ENCODE measurements at regions of chr11 and their contacts with region 1.

Region 1: GRCh38 chr11:75562048-75562835 is at the start of gene SERPINH1:
- DNase-seq: peak in 2 of 3 donors; percentile 44 to 54
- H3K4me3 ChIP-seq: peak within 1 kb of the TSS; percentile 80 to 89 (median 85)
- H3K27ac ChIP-seq: peak within 1 kb of the TSS in 1 of 2 experiments; percentile 75
- H3K4me1 ChIP-seq: peaks cover 0 to 49% (median 27%) of the 10 kb centered on the region in 4 experiments
- H3K27me3 ChIP-seq: no peaks in the 10 kb centered on the region

Region 2: DNA sequence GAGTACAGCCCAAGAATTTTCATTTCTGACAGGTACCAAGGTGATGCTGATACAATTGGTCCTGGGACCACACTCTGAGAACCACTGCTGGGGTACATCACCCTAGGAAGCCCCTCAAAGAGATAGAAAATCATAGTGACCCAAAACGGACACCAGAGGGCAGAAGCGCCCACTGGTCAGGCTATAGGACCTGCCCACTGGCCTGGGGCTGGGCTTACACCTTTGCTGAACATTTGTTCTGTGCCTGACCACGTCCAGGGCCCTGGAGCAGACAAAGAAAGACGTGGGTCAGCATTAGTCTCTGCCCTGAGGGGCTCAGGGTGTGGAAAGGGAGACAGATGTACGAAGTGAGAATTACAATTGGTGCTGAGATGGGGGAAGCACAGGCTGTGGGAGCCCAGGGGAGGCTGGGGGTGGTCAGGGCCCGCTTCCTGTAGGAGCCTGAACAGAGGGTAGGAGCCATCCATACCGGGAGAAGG is 14.6 kb before region 1 on chr11:
- CTCF ChIA-PET with region 1: interaction called, 13 read pairs
- POLR2A ChIA-PET with region 1: no interaction called
- DNase-seq: peak in 2 of 3 donors; percentile 32 to 46
- H3K4me3 ChIP-seq: no peak overlapping the region
- H3K27ac ChIP-seq: no peak overlapping the region
- H3K4me1 ChIP-seq: peaks cover 0 to 7% (median 2%) of the 10 kb centered on the region in 4 experiments
- H3K27me3 ChIP-seq: peaks cover 0 to 3% (median 0%) of the 10 kb centered on the region in 5 experiments

Region 3: DNA sequence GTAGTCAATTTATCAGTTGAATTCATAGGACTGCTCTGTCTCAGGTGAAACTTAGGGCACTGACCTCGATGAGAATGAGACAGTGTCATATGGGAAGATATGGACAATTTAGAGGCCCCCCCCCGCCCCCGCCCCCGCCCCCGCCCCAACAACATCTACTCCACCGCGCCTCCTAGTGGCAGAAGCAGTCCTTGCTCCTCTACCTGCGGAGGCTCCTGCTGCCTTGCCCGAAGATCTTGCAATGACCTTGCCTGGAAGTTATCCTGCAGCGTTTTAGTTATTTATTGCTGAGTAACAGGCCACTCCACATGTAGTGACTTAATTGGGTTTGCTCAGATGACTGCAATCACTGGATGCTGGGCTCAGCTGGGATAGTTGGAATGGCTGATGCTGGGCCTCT is 15.0 kb after region 1 on chr11:
- CTCF ChIA-PET with region 1: interaction called, 13 read pairs
- POLR2A ChIA-PET with region 1: no interaction called
- DNase-seq: peak in 2 of 3 donors; percentile 24 to 40
- H3K4me3 ChIP-seq: no peak overlapping the region
- H3K27ac ChIP-seq: no peak overlapping the region
- H3K4me1 ChIP-seq: peaks cover 0 to 13% (median 10%) of the 10 kb centered on the region in 4 experiments
- H3K27me3 ChIP-seq: no peaks in the 10 kb centered on the region

Region 4: DNA sequence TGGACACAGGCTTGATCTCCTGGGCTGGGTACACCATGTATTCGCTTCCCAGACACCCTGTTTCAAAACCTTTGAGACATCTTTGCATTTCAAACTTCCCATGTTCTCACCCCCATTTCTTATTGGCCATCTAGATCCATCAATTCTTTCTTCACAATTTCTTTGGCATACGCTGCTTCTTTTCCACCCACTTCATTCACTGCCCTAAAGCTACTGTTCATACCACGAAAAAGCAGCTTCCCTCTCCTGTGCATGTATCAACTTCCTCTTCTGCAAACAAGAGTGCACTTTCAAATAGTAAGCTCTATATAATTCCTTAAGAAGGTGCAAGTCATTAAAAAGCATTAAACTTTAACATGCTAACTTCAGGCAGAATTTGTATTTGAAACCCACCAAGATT is 274.2 kb after region 1 on chr11:
- CTCF ChIA-PET with region 1: no interaction called
- POLR2A ChIA-PET with region 1: no interaction called
- DNase-seq: no peak
- H3K4me3 ChIP-seq: no peak overlapping the region
- H3K27ac ChIP-seq: no peak overlapping the region
- H3K4me1 ChIP-seq: peaks cover 3 to 13% (median 6%) of the 10 kb centered on the region in 4 experiments
- H3K27me3 ChIP-seq: no peaks in the 10 kb centered on the region